ENCODE measurements at regions of chr11 and their contacts with region 1.

Region 1: GRCh38 chr11:114802878-114803277 is 124.6 kb downstream of the NXPE2 start:
- DNase-seq: no peak
- ATAC-seq: no peak

Region 2: GRCh38 chr11:114073828-114074381 is 729.0 kb before region 1 on chr11:
- intact Hi-C with region 1: no loop called
- DNase-seq: no peak
- ATAC-seq: no peak

Region 3: DNA sequence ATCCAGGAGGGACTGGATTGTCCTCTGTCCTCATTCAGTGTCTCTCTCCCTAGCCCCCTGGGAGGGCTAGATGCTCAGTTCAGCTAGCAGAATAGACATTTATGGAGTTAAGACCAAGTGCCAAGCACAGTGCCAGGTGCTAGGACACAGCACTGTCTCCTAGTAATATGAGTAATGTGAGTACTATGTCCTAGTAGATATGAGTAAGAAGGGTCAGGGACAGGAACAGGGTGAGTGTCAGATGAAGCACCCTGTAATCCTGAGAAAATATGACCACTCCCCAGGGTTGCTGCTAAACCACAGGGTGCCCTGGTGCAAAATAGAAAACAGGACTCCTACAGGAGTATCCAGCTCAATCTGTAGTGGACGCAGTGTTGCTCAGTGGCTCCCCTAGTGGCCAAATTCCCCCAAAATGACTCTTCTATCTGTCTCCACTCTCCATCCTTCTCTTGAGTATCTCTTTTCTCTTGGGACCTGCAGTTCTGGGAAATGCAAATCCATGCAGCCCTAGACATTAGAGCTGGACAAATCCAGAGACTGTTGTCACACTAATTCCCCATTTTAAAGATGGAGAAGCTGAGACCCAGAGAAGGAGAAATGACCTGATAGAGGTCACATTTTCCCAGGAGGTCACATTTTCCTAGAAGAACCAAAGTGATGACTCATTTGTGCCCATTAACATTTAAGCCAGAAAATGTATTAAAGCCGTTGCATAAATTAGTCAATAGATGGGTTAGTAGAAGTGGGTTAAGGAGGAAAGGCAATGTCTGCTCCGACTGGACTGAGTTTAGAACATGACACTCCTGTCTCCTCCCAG is 89.7 kb after region 1 on chr11:
- intact Hi-C with region 1: loop called in 1 of 2 experiments (anchors 5 kb)
- DNase-seq: no peak
- ATAC-seq: peak; percentile 8 to 82

Region 4: DNA sequence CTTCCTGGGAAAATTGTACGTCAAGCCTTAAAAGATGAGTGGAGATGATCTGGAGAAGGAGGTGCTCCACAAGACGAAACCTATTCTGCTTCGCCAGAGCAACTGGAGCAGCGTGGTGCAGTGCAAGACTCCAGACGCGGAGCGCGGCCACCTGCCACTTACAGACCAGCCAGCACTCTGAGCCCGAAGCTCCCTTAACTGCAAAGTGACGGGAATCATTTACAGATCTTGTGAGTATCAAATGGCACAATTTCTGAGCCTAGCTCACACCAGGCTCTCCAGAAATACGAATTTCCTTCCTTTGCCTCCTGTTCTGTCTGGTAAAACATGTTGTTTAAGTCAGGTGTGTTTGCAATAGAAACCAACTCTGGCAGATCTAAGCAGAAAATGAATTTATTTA is 332.0 kb after region 1 on chr11:
- intact Hi-C with region 1: no loop called
- DNase-seq: no peak
- ATAC-seq: no peak

Measured in left cardiac atrium (tissue), 4 donors.